ENCODE measurements at regions of chr1 and their contacts with region 1.

Region 1: DNA sequence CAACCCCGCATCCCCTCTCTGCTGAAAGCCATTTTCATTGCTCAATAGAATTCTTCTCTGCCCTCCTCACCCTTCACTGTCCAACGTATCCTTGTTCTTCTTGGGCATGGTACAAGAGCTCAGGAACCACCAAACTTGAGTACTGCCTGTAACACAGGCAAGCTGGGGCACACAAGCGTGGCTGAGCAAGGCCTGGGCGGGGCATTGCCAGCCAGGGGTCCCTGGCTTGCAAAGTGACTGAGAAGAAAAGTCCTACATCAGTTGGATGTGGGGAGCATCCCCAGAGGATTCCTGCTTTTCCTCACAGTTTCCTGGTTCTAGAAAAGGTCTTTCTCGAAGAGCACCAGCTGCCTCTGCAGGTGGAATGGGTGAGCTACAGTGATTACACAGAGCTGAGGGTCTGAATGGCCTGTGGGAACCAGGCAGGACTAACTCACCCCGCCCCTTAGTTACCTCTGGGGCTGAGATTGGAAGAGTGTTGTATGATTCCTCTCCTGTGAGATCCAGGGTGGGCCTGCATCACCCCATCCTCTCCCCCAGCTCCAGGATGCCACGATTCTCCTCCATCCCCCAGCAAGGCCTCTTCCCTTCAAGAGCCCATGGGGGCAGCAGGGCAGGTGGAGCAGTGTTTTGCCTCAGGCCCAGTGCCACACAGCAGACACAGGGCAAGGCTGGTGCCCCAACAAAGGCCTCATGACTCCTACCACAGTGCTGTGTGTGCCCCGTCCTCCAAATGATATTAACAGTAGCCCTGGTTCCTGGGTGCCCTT is 121.9 kb downstream of the MATN1 start:
- DNase-seq: no peak

Region 2: GRCh38 chr1:30550365-30551220 is 50.9 kb before region 1 on chr1:
- intact Hi-C with region 1: loop called in 1 of 2 experiments (anchors 5 kb)
- DNase-seq: no peak

Region 3: DNA sequence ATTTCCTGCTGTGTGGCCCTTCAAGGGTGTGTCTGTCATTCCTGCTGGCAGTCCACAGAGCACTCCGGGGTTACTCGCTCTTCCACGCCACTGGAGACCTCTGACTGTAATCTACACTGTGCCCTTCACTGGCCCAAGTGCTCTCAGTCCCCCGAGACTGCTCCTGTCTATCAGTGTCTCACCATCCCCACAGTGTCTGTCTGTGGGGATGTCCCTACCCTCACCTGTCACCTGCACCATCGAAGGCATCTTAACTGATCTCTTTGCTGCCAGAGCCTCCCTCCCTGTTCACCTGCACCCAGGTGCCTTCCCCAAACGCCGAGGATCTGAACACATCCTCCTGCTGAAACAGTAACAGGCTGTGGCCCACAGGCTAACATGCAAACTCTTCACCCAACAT is 14.8 kb before region 1 on chr1:
- intact Hi-C with region 1: loop called in 1 of 2 experiments (anchors 1 kb)
- DNase-seq: no peak

Region 4: DNA sequence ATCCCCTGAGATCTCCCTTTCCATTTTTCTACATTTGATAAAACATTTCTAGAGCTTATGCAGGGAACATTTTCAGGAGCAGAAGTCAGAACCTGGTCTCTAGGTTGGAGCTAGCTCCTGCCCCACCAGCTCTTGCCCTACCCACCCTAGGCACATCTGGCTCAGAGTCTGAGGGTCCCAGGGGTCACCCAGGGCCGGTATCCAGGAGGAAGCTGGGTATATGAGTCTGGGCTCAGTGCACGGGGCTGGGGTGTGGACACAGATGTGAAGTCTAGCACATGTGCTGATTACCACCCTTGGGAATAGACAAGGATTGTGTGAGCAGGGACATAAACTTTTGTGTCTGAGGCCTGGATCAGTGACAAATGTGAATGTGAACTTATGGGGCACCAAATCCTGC is 26.5 kb after region 1 on chr1:
- intact Hi-C with region 1: no loop called
- DNase-seq: no peak

Region 5: DNA sequence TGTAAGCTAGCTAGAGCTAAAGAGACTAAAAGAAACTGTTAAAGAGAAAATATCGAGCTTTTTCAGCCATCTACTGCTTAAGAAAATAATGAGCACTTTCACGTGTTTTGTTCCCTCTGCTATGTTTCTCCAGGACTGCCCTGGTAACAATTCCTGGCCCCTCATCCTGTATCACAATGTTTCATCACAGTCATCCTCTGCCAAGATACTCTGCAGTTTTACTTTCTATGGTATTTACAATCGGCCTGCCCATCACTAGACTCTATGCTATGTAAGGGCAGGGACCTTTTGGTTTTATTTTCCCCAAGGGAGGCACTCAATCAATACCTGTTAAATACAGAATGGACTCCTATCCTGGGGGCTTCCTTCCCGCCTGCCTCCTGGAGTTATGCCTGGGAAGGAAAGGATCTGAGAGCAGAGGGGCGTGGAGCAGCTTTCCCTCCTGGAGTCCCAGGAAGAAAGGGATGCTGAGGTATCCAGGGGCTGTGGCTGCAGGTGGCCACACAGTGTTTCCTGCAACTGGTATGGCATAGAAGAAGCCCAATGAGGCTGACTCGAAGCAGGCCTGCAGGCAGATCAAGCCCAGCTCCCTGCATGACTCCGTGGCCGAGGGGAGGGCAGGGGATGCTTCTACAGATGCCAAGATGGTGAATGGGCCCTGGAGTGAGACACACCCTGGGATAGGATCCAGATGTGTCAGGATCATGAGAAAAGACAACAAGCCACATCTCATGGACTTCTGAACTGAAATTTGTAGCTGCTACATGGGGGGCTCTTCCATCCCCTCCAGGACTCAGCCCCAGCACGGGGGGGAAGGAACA is 68.9 kb after region 1 on chr1:
- intact Hi-C with region 1: loop called in 1 of 2 experiments (anchors 2 kb)
- DNase-seq: peak; percentile 78

Region 6: DNA sequence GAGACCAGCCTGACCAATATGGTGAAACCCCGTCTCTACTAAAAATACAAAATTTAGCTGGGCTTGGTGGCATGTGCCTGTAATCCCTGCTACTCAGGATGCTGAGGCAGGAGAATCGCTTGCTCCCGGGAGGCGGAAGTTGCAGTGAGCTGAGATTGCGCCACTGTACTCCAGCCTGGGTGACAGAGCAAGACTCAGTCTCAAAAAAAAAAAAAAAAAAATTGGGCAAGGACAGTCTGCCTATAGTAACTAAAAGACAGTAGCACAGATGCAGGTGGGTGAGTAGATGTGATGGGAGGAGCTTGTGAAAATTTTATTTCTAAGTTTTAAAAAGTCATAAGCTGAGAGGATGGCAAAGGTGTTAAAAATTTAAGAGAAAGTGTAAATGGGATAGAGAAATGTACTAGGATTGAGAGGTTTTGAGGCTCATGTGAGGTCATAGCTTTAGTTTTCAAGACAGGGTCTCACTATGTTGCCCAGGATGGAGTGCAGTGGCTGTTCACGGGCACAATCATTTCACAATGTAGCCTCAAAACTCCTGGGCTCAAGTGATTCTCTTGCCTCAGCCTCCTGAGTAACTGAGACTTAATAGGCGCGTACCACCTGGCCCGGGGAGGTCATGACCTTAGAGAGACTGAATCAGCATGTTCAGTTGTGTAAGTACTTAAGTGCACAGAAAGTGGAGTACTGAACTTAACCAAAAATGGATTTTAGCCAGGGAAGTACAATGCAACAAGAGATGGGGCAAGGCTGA is 1303.0 kb after region 1 on chr1:
- intact Hi-C with region 1: no loop called
- DNase-seq: peak; percentile 87

Measured in posterior vena cava (tissue), 2 donors.